B cell (primary cell): ENCODE measurements at regions of chr22 and their contacts with region 1.

Region 1: GRCh38 chr22:31148953-31149627 is 8.8 kb upstream of the PLA2G3 start:
- DNase-seq: peak; percentile 57
- ATAC-seq: peak; percentile 78
- H3K4me3 ChIP-seq: no peak overlapping the region
- H3K4me3 Mint-ChIP-seq: no peak overlapping the region
- H3K27ac ChIP-seq: no peak overlapping the region
- H3K27ac Mint-ChIP-seq: no peak overlapping the region
- H3K4me1 ChIP-seq: no peaks in the 10 kb centered on the region
- H3K4me1 Mint-ChIP-seq: no peaks in the 10 kb centered on the region
- H3K27me3 ChIP-seq: no peaks in the 10 kb centered on the region
- H3K27me3 Mint-ChIP-seq: peaks cover 14% of the 10 kb centered on the region
- CTCF ChIP-seq: peak; percentile 66

Region 2: DNA sequence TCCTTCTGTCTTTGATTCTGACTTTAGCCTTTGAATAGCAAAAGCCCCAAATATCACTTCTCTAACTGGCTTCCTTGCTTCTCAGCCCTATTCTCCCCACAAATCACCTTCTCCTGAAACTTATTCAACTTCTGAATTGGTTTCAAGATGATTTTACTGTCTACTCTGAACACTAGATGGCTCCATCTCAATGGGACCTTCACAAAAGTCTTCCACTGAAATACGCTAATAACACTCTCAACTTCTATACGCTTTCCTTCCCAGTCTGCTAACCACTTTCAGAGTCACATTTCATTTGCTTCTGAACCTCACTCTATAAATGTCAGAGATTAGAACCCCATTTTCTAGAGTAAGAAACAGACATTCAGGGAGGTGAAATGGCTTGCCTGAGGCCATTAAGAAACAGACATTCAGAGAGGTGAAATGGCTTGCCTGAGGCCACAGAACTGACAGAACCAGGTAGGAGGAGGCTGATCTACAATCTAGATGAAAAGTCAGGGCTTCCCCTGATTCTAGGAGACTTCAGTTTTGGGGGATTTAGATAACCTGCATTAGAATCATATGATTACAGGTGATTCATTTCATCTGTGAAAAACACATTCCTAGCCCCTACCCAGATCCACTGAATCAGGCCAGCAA is 201.2 kb before region 1 on chr22:
- CTCF ChIA-PET with region 1: interaction called, 7 read pairs
- POLR2A ChIA-PET with region 1: no interaction called
- intact Hi-C with region 1: loop called (anchors 5 kb)
- DNase-seq: peak; percentile 39
- ATAC-seq: no peak
- H3K4me3 ChIP-seq: no peak overlapping the region
- H3K4me3 Mint-ChIP-seq: no peak overlapping the region
- H3K27ac ChIP-seq: no peak overlapping the region
- H3K27ac Mint-ChIP-seq: no peak overlapping the region
- H3K4me1 ChIP-seq: no peaks in the 10 kb centered on the region
- H3K4me1 Mint-ChIP-seq: no peaks in the 10 kb centered on the region
- H3K27me3 ChIP-seq: no peaks in the 10 kb centered on the region
- H3K27me3 Mint-ChIP-seq: no peaks in the 10 kb centered on the region
- CTCF ChIP-seq: peak; percentile 24

Region 3: DNA sequence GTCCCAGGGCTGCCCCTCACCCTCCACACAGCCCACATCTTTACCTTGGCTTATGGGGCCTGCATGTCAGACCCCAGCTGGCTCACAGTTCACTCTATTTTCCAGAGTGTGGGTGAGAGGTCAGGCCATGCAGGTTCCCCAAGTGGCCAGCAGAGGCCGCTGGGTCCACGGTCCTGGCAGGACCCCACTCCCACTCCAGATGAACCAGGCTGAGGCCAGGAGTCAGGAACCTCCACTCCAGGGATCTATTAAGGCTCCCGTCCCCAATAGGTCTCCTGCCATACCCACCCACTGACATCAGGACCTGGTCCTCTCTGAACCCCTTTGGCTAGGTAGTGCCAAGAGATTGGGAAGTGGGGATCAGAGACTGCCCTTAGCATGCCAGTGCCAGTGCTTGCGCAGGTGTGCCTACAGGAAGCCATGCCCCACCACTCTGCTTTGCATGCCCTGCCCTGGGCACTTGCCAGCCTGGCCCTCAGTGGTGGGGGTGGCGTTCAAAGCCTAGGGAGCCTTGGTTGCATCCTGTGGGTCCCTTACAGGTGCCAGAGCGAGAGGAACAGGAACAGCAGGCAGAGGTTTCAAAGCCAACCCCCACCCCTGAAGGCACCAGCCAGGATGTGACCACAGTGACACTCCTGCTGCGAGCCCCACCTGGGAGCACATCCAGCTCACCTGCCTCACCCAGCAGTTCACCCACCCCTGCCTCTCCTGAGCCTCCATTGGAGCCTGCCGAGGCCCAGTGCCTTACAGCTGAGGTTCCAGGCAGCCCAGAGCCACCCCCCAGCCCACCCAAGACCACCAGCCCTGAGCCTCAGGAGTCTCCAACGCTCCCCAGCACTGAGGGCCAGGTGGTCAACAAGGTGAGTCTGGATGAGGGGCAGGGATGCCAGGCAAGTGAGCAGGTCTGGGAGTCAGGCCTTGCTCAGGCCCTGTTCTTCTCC is 59.7 kb before region 1 on chr22:
- CTCF ChIA-PET with region 1: interaction called, 7 read pairs
- POLR2A ChIA-PET with region 1: no interaction called
- intact Hi-C with region 1: loop called (anchors 2 kb)
- DNase-seq: peak; percentile 63
- ATAC-seq: peak; percentile 35
- H3K4me3 ChIP-seq: no peak overlapping the region
- H3K4me3 Mint-ChIP-seq: peak overlapping the region; percentile 60
- H3K27ac ChIP-seq: peak overlapping the region; percentile 29 to 36
- H3K27ac Mint-ChIP-seq: peak overlapping the region; percentile 77
- H3K4me1 ChIP-seq: peaks cover 14 to 39% of the 10 kb centered on the region in 2 donors
- H3K4me1 Mint-ChIP-seq: peaks cover 16% of the 10 kb centered on the region
- H3K27me3 ChIP-seq: no peaks in the 10 kb centered on the region
- H3K27me3 Mint-ChIP-seq: no peaks in the 10 kb centered on the region
- CTCF ChIP-seq: peak; percentile 67

Region 4: GRCh38 chr22:31107178-31107893 is 41.8 kb before region 1 on chr22 and contains the start of gene SELENOM:
- CTCF ChIA-PET with region 1: no interaction called
- POLR2A ChIA-PET with region 1: no interaction called
- intact Hi-C with region 1: loop called (anchors 2 kb)
- DNase-seq: peak; percentile 90
- ATAC-seq: peak; percentile 97
- H3K4me3 ChIP-seq: peak within 1 kb of the TSS; percentile 42 to 91 (median 72)
- H3K4me3 Mint-ChIP-seq: peak within 1 kb of the TSS; percentile 96
- H3K27ac ChIP-seq: peak within 1 kb of the TSS; percentile 37 to 57
- H3K27ac Mint-ChIP-seq: peak within 1 kb of the TSS; percentile 86
- H3K4me1 ChIP-seq: peaks cover 16 to 17% of the 10 kb centered on the region in 2 donors
- H3K4me1 Mint-ChIP-seq: peaks cover 22% of the 10 kb centered on the region
- H3K27me3 ChIP-seq: no peaks in the 10 kb centered on the region
- H3K27me3 Mint-ChIP-seq: no peaks in the 10 kb centered on the region
- CTCF ChIP-seq: peak; percentile 77
- total RNA-seq, gene SELENOM: 18.4 and 23.6 TPM in 2 replicates

Region 5: GRCh38 chr22:31327883-31328696 is 179.0 kb after region 1 on chr22:
- CTCF ChIA-PET with region 1: no interaction called
- POLR2A ChIA-PET with region 1: no interaction called
- intact Hi-C with region 1: no loop called
- DNase-seq: no peak
- ATAC-seq: no peak
- H3K4me3 ChIP-seq: no peak overlapping the region
- H3K4me3 Mint-ChIP-seq: no peak overlapping the region
- H3K27ac ChIP-seq: no peak overlapping the region
- H3K27ac Mint-ChIP-seq: no peak overlapping the region
- H3K4me1 ChIP-seq: no peaks in the 10 kb centered on the region
- H3K4me1 Mint-ChIP-seq: peaks cover 1% of the 10 kb centered on the region
- H3K27me3 ChIP-seq: no peaks in the 10 kb centered on the region
- H3K27me3 Mint-ChIP-seq: no peaks in the 10 kb centered on the region
- CTCF ChIP-seq: no peak